PC-9 (cell line): ENCODE measurements at regions of chr18 and their contacts with region 1.

Region 1: GRCh38 chr18:55376387-55376786 is 211.6 kb downstream of the TCF4 start:
- DNase-seq: no peak
- H3K4me3 ChIP-seq: no peak overlapping the region
- H3K27ac ChIP-seq: no peak overlapping the region
- H3K4me1 ChIP-seq: no peaks in the 10 kb centered on the region
- H3K27me3 ChIP-seq: no peaks in the 10 kb centered on the region
- CTCF ChIP-seq: no peak

Region 2: GRCh38 chr18:55462652-55463051 is 86.3 kb after region 1 on chr18:
- CTCF ChIA-PET with region 1: no interaction called
- POLR2A ChIA-PET with region 1: interaction called, 14 read pairs
- intact Hi-C with region 1: no loop called
- DNase-seq: no peak
- H3K4me3 ChIP-seq: no peak overlapping the region
- H3K27ac ChIP-seq: no peak overlapping the region
- H3K4me1 ChIP-seq: no peaks in the 10 kb centered on the region
- H3K27me3 ChIP-seq: no peaks in the 10 kb centered on the region
- CTCF ChIP-seq: no peak

Region 3: GRCh38 chr18:55753643-55754263 is 377.4 kb after region 1 on chr18:
- CTCF ChIA-PET with region 1: no interaction called
- POLR2A ChIA-PET with region 1: no interaction called
- intact Hi-C with region 1: no loop called
- DNase-seq: peak in 1 of 2 experiments; percentile 85
- H3K4me3 ChIP-seq: no peak overlapping the region
- H3K27ac ChIP-seq: peak overlapping the region; percentile 95
- H3K4me1 ChIP-seq: peaks cover 20% of the 10 kb centered on the region
- H3K27me3 ChIP-seq: no peaks in the 10 kb centered on the region
- CTCF ChIP-seq: no peak

Region 4: DNA sequence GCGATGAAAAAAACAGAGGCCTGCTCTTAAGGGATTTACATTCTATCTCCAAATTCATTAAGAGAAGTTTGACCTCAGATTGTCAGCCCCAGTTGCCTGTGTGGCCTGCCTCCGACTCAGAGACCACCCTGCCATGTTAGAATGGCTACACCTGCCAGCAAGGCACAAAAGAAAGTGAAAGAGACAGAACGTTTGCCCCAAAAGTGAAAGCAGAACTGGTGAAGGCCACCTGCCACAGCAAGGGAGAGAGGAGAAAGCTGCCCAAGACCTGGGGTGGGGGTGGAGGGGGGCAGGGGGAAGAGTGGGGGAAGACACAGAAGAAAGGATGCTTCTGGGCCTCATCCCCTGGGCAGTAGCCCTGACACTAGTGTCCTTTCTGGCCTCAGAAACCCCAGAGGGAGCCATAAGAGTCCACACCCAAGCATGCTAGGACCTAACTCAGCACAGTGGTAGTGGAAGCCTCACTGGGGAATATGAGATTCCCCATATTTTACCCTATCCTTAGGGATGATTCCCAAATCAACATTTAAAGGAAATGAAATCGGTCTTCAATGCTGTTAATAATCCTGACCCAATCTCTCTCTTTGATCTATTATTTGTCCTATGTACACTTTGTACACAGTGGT is 872.3 kb after region 1 on chr18:
- CTCF ChIA-PET with region 1: no interaction called
- POLR2A ChIA-PET with region 1: no interaction called
- intact Hi-C with region 1: no loop called
- DNase-seq: no peak
- H3K4me3 ChIP-seq: no peak overlapping the region
- H3K27ac ChIP-seq: no peak overlapping the region
- H3K4me1 ChIP-seq: 0 out of 2 replicates have a peak, but pooled peaks cover 4% of the 10 kb centered on the region
- H3K27me3 ChIP-seq: no peaks in the 10 kb centered on the region
- CTCF ChIP-seq: no peak